MCF 10A (cell line): ENCODE measurements at regions of chr1 and their contacts with region 1.

Region 1: GRCh38 chr1:67214420-67215174 is 48.3 kb downstream of the IL23R start:
- DNase-seq: peak; percentile 48
- H3K4me3 Mint-ChIP-seq: no peak overlapping the region
- H3K27ac Mint-ChIP-seq: no peak overlapping the region
- H3K4me1 Mint-ChIP-seq: no peaks in the 10 kb centered on the region
- H3K27me3 Mint-ChIP-seq: no peaks in the 10 kb centered on the region
- CTCF ChIP-seq: peak; percentile 66

Region 2: GRCh38 chr1:66764994-66765578 is 449.5 kb before region 1 on chr1:
- CTCF ChIA-PET with region 1: interaction called, 58 read pairs
- POLR2A ChIA-PET with region 1: interaction called, 3 read pairs
- intact Hi-C with region 1: no loop called
- DNase-seq: peak; percentile 65
- H3K4me3 Mint-ChIP-seq: no peak overlapping the region
- H3K27ac Mint-ChIP-seq: no peak overlapping the region
- H3K4me1 Mint-ChIP-seq: no peaks in the 10 kb centered on the region
- H3K27me3 Mint-ChIP-seq: no peaks in the 10 kb centered on the region
- CTCF ChIP-seq: peak; percentile 78

Region 3: DNA sequence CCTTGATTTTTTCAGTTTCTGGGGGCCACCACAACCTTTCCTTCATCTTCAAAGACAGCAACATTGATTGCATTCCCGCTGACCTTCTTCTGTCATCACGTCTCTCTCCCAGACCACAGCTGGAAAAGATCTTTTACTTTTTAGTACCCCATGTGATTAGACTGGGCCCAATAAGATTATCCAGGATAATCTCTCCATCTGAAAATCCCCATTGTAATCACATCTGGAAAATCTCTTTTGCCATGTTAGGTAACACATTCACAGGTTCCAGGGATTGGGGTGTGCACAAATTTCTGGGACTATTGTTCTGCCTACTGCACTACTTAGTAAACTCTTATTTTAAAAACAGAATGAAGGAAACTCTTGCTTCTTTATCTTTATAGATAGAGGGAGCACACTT is 366.4 kb before region 1 on chr1:
- CTCF ChIA-PET with region 1: no interaction called
- POLR2A ChIA-PET with region 1: no interaction called
- intact Hi-C with region 1: no loop called
- DNase-seq: no peak
- H3K4me3 Mint-ChIP-seq: no peak overlapping the region
- H3K27ac Mint-ChIP-seq: no peak overlapping the region
- H3K4me1 Mint-ChIP-seq: no peaks in the 10 kb centered on the region
- H3K27me3 Mint-ChIP-seq: no peaks in the 10 kb centered on the region
- CTCF ChIP-seq: no peak

Region 4: DNA sequence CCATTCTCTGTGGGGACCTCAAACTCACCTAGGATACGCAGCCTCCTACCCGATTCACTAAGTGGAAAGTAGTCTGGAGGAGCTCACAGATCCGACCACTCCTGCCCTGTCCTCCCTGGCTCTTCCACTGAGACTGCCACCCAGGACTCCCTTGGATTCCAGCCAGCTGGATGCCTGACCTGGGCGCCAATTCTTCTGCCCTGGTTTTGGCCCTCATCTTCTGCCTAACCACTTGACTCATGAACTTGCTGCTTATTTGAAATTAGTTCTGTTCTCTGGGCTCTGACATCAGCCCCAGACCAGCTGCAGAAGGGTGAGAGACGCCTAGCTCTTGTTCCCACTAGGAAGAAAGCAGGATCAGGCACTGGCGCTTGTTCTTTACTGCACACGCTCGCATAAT is 209.5 kb before region 1 on chr1:
- CTCF ChIA-PET with region 1: interaction called, 11 read pairs
- POLR2A ChIA-PET with region 1: no interaction called
- intact Hi-C with region 1: no loop called
- DNase-seq: no peak
- H3K4me3 Mint-ChIP-seq: no peak overlapping the region
- H3K27ac Mint-ChIP-seq: no peak overlapping the region
- H3K4me1 Mint-ChIP-seq: no peaks in the 10 kb centered on the region
- H3K27me3 Mint-ChIP-seq: no peaks in the 10 kb centered on the region
- CTCF ChIP-seq: no peak

Region 5: DNA sequence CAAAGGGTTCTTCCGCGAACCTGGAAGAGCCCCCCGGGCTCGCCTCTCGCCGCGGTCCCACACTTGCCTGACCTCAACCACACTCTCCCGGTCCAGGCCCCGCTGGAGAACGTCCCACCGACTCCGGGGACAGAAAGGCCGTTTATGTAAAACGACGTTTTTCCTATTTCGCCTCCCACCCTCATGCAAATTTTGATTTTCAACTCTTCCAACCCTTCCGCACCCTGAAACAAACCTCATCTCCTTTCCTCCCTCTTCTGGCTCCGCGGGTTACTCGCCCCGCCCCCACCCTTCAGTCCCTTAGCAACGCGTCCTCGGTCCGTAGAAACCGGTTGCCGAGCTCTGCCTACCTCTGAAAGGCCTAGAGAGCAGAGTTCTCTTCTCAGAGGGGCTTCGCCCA is 79.9 kb before region 1 on chr1 and contains the start of gene C1orf141:
- CTCF ChIA-PET with region 1: no interaction called
- POLR2A ChIA-PET with region 1: no interaction called
- intact Hi-C with region 1: no loop called
- DNase-seq: no peak
- H3K4me3 Mint-ChIP-seq: no peak within 1 kb of the TSS
- H3K27ac Mint-ChIP-seq: no peak within 1 kb of the TSS
- H3K4me1 Mint-ChIP-seq: peaks cover 7% of the 10 kb centered on the region
- H3K27me3 Mint-ChIP-seq: no peaks in the 10 kb centered on the region
- CTCF ChIP-seq: no peak
- total RNA-seq, gene C1orf141: not detected in 2 replicates

Region 6: DNA sequence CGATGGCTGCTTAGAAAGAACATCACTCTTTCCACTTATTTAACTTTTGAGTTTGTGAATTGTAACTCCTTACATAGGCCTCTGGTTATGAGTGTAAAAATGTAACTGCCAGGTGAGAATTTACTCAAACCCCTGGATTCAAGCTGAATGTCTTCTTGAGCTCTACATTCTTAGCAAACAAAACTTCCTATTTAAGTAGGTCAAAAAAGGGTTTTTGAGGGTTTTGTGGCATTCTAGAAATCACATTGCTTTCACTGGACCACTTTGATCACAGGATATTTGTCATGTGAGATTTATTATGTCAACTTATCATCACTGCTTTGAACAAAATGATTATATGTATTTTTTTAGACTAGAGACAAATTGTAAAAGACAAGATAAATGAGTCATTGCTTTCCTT is 42.6 kb before region 1 on chr1:
- CTCF ChIA-PET with region 1: interaction called, 21 read pairs
- POLR2A ChIA-PET with region 1: no interaction called
- intact Hi-C with region 1: no loop called
- DNase-seq: no peak
- H3K4me3 Mint-ChIP-seq: no peak overlapping the region
- H3K27ac Mint-ChIP-seq: no peak overlapping the region
- H3K4me1 Mint-ChIP-seq: no peaks in the 10 kb centered on the region
- H3K27me3 Mint-ChIP-seq: no peaks in the 10 kb centered on the region
- CTCF ChIP-seq: no peak

Region 7: DNA sequence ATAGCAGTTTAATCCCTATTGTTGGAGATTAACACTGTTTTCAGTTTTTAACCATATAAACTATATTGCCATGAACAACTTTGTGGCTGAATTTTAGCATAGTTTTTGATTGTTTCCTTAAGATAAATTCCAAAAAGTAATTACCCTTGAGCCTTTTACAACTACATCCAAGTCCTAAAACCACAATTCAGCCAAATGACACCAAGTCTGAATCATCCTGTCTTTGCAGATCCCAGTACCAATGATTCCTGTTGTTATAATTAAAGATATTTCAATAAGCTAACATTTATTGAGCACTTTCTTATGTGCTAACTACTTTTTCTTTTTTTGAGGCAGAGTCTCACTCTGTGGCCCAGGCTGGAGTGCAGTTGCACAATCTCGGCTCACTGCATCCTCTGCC is 12.7 kb before region 1 on chr1:
- CTCF ChIA-PET with region 1: interaction called, 24 read pairs
- POLR2A ChIA-PET with region 1: interaction called, 3 read pairs
- intact Hi-C with region 1: no loop called
- DNase-seq: no peak
- H3K4me3 Mint-ChIP-seq: no peak overlapping the region
- H3K27ac Mint-ChIP-seq: no peak overlapping the region
- H3K4me1 Mint-ChIP-seq: no peaks in the 10 kb centered on the region
- H3K27me3 Mint-ChIP-seq: no peaks in the 10 kb centered on the region
- CTCF ChIP-seq: no peak

Region 8: DNA sequence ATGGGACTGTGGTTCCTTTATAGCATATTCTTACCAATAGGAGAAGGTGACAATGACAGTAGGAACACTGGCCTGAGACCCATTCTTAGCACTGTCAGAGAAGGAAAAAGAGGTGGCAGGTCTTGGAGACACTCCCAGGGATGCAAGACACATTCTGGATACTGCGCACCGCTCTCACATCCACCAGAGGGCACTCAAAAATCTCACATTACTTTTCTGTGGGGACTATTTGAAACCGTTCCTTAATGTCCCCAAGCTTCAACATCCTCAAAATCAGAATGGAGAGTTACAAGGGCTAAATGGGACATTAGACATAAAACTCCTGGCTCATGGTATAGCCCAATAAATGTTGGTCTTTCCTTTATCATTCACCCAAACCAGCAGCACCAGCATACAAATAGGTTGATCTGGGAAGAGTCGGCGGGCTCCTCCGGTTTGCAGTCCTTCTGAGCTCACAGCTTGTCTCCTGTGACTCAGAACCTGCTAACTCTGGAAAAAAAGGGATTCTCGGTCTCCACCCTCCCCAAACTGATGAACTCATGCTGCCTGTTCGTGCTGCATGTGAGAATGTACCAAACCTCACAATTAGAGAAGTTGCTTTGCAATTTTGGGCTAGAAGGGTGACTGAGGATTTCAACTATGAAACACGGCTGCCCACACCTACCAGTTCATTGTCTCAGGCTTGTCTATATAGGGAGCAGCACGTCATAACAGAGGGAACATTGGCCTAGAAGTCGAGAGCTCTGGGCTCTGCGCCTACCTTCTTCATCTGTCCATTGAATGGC is 133.3 kb after region 1 on chr1:
- CTCF ChIA-PET with region 1: interaction called, 12 read pairs
- POLR2A ChIA-PET with region 1: no interaction called
- intact Hi-C with region 1: no loop called
- DNase-seq: peak; percentile 74
- H3K4me3 Mint-ChIP-seq: peak overlapping the region; percentile 67
- H3K27ac Mint-ChIP-seq: peak overlapping the region; percentile 80
- H3K4me1 Mint-ChIP-seq: peaks cover 14% of the 10 kb centered on the region
- H3K27me3 Mint-ChIP-seq: no peaks in the 10 kb centered on the region
- CTCF ChIP-seq: peak; percentile 74

Region 9: DNA sequence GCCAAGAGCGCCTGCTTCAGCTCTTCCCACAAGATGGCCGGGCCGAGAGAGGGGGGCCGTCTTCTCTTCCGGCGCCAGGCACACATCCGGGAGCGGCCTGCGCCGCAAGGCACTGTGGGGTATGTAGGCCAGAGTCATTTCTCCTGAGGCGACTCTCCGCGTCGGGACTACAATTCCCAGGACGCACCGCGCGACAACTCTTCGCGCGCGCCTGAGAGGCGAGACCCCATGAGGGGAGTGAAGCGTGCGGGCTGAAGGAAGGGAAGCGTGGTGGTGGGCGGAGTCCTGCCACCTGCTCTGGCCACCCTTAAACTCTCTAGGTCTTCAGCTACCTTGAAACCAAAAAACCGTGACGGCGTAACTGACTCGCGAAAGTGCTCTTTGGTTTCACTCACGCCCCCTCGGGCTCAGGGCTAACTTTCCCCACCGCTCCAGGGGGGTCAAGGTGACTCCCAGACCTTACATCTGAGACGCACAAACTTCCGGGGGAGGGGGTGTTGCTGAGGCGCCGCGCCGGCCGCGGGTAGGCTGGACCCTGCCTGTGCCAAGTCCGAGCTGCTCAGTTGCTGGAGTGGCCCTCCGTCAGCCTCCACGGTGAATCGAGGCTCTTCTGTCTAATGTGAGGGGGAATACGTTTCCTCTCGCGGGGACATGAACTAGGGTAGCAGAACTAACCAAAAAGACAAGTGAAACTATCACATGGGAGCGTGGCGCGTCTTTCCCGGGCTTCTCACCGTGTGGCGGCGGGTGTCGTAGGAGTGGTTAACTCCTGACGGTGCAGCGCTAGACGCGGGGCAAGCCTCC is 216.0 kb after region 1 on chr1 and contains the start of gene SERBP1:
- CTCF ChIA-PET with region 1: interaction called, 14 read pairs
- POLR2A ChIA-PET with region 1: interaction called, 6 read pairs
- intact Hi-C with region 1: no loop called
- DNase-seq: peak; percentile 98
- H3K4me3 Mint-ChIP-seq: peak within 1 kb of the TSS; percentile 100
- H3K27ac Mint-ChIP-seq: peak within 1 kb of the TSS; percentile 98
- H3K4me1 Mint-ChIP-seq: peaks cover 28% of the 10 kb centered on the region
- H3K27me3 Mint-ChIP-seq: no peaks in the 10 kb centered on the region
- CTCF ChIP-seq: no peak
- total RNA-seq, gene SERBP1: 233 and 315 TPM in 2 replicates